Cardiac septum (tissue), 1 donor: ENCODE measurements at regions of chr2 and their contacts with region 1.

Region 1: GRCh38 chr2:112481050-112481527 is 867 bp upstream of the TTL start:
- DNase-seq: peak; percentile 93

Region 2: DNA sequence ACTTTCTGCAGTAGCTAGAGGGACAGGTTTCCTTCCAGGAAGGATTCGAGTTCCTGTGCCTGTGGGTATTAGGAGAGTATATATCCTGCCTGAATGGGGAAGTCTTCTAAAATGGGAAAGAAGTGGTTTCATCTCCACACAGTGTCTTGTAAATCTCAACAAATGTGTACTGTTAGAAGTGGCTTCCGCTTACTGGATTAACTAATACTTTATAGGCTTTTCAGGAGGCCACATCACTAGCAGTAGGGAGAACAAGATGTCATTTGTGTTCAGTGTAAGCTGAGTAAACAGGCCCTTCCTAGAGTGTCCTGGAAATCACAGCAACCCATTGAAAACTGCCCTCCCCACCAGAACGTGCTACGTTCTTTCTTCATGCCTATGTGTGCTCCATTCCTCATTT is 48.7 kb after region 1 on chr2:
- intact Hi-C with region 1: no loop called
- DNase-seq: no peak

Region 3: DNA sequence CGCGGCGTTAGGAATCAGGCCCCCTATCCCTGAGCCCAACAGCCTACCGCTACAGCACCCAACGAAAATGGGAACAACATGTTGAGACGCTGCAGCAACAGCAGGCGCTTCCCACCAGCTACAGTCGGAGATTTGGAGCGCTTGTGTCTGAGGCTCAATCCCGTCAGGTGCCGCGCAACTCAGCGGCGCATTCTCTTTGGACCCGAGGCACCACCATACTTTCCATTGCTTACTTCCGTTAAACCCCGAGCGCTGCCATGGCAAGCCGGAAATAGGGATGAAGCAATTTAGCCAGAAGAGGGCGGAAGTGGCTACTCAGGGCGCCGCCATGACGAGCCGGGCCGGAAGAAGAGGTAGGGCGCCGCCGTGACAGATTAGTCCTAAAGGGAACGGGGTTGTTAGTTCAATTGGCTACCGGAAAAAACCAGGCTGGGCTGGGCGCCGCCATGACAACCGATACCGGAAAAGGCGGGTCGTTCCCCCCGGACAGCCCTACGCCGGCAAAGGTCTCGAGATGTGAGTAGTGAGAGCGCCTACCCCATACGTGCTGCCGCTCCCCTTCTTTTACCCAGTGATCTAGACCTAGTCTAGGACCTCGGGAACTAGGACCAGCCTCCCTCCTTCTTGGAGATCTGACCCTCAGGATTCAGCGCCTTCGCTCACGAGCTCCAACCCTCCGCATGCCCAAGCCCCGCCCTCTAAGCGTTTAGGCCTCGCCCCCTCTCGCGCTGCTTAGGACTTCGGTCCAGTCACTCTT is 103.2 kb after region 1 on chr2 and contains the start of gene CHCHD5:
- intact Hi-C with region 1: loop called (anchors 1 kb)
- DNase-seq: peak; percentile 97
- total RNA-seq, gene CHCHD5: 24.9 TPM